B cell (primary cell): ENCODE measurements at regions of chr7 and their contacts with region 1.

Region 1: GRCh38 chr7:139340037-139340807 is 915 bp upstream of the FMC1 start:
- DNase-seq: peak; percentile 100
- ATAC-seq: peak; percentile 77
- H3K4me3 ChIP-seq: peak overlapping the region; percentile 73 to 99 (median 94)
- H3K4me3 Mint-ChIP-seq: peak overlapping the region; percentile 96
- H3K27ac ChIP-seq: peak overlapping the region; percentile 97 to 98
- H3K27ac Mint-ChIP-seq: peak overlapping the region; percentile 100
- H3K4me1 ChIP-seq: peaks cover 10 to 23% of the 10 kb centered on the region in 2 donors
- H3K4me1 Mint-ChIP-seq: peaks cover 30% of the 10 kb centered on the region
- H3K27me3 ChIP-seq: no peaks in the 10 kb centered on the region
- H3K27me3 Mint-ChIP-seq: peaks cover 5% of the 10 kb centered on the region
- CTCF ChIP-seq: peak; percentile 67

Region 2: DNA sequence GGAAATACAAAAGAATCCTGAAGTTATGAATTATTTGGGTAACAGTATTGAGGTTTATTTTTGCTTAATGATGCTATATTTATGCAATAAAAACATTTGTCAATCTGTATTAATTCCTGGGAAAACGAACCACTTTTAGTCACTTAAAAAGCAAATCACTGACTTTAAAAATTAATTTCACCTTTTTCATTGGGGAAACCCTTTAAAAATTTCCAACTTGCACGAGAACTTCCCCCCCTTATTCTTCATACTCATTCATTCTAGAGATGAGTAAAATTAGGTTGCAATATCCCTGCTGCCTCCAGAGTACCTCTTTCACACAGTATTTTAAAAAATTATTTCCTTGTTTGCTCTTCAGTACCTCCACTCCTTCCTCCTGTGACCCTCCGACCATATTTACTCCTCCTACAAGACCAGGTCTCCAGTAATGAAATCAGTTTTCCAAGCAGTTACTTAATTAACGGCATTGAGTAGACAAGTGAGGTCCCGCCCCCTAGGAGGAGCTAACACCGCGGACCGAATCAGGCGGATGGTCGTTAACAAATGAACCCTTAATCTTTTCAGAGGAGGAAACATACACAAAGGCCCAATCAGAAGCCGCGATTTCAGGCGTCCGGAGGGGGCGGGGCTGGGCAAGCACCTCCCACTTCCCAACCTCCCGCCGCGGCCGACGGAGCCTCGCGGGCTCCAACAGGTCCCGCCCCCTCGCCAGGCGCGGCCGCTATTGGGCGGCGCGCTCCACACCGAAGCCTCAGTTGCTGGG is 880.6 kb before region 1 on chr7:
- CTCF ChIA-PET with region 1: no interaction called
- POLR2A ChIA-PET with region 1: no interaction called
- intact Hi-C with region 1: loop called (anchors 5 kb)
- DNase-seq: peak; percentile 99
- ATAC-seq: peak; percentile 87
- H3K4me3 ChIP-seq: peak overlapping the region; percentile 40 to 73 (median 62)
- H3K4me3 Mint-ChIP-seq: peak overlapping the region; percentile 91
- H3K27ac ChIP-seq: peak overlapping the region in 1 of 2 donors; percentile 56
- H3K27ac Mint-ChIP-seq: peak overlapping the region; percentile 94
- H3K4me1 ChIP-seq: peaks cover 9 to 14% of the 10 kb centered on the region in 2 donors
- H3K4me1 Mint-ChIP-seq: peaks cover 19% of the 10 kb centered on the region
- H3K27me3 ChIP-seq: no peaks in the 10 kb centered on the region
- H3K27me3 Mint-ChIP-seq: peaks cover 3% of the 10 kb centered on the region
- CTCF ChIP-seq: no peak

Region 3: DNA sequence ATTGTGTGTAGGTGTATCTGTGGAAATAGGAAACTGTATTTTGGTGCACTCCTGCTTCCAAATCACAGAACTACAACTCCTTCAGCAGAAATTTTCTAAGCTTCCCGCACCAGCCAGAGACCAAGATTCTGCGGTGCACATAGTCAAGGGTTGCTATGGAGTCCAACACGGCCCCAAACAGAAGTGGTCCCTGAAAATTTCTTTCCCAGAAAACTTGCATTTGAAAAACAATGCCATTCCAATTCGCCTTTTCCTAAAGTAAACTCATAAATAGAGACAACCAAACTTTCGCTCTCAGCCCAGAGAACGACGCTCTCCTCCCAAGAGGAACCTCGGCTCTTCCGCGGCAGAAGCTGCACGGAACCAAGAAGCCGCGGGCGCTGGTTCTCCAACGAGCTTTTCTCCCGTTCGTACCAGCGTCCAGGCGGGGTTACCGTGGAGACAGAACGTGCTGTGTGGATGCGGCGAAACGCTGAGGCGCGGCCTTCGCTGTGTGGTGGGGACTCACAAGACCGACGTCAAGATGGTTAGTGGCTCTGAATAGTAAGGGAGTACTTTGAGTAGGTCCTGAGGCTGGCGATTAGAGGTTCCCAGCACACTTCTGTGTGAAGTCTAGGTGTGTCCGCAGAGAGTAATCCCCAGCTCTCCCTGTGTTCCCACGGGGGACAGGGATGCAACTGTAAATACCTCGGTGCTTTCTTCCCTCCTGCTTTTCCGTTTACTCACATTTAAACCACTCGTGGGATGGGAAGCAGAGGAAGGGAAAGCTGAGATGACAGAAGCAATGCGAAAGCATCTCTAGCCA is 206.7 kb before region 1 on chr7:
- CTCF ChIA-PET with region 1: no interaction called
- POLR2A ChIA-PET with region 1: interaction called, 4 read pairs
- intact Hi-C with region 1: loop called (anchors 1 kb)
- DNase-seq: peak; percentile 90
- ATAC-seq: peak; percentile 96
- H3K4me3 ChIP-seq: peak overlapping the region; percentile 46 to 63 (median 58)
- H3K4me3 Mint-ChIP-seq: peak overlapping the region; percentile 93
- H3K27ac ChIP-seq: peak overlapping the region; percentile 18 to 69
- H3K27ac Mint-ChIP-seq: peak overlapping the region; percentile 88
- H3K4me1 ChIP-seq: peaks cover 9 to 13% of the 10 kb centered on the region in 2 donors
- H3K4me1 Mint-ChIP-seq: peaks cover 18% of the 10 kb centered on the region
- H3K27me3 ChIP-seq: no peaks in the 10 kb centered on the region
- H3K27me3 Mint-ChIP-seq: no peaks in the 10 kb centered on the region
- CTCF ChIP-seq: no peak

Region 4: DNA sequence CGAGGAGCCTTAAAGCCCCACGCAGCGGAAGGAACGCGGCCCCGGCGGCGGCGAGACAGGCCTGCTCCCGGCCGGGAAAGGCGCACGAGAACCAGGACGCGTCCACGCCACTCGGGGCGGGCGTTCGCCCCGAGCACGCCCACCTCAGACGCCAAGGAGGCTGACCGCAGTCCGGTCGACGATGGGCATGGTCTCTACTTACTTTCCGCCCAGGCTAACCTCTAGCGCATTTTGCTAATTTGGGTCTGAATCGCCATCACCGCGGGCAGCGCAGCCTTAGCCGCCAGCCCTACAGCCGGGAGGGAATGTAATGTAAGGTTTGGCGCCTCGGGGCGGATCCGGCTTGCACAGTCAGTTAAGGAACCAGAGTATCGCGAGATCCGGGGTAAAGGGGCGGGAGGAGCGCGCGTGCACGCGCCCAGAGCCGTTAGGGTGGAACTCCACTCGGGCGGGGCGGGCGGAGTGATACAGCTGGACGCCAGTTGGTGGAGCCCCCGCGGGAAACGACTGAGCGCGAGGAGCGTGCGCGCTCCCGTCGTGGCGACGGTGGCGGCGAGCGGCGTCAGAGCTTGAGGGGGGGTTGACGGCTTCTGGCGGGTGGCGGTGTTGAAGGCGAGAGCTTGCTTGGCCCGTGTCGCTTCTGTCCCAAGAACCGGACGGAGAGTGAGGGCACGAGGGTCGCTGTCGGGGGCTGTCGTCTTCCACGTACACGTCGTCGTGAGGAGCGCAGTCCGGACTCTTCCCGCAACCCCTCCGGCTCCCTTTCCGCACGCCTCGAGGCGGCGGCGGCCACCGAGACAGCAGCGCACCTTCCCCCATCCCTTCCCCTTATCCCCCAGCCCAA is 19.4 kb after region 1 on chr7 and contains the start of gene LUC7L2:
- CTCF ChIA-PET with region 1: interaction called, 16 read pairs
- POLR2A ChIA-PET with region 1: interaction called, 28 read pairs
- intact Hi-C with region 1: loop called (anchors 1 kb)
- DNase-seq: peak; percentile 99
- ATAC-seq: peak; percentile 77
- H3K4me3 ChIP-seq: peak within 1 kb of the TSS; percentile 91 to 96 (median 96)
- H3K4me3 Mint-ChIP-seq: peak within 1 kb of the TSS; percentile 99
- H3K27ac ChIP-seq: peak within 1 kb of the TSS; percentile 98 to 99
- H3K27ac Mint-ChIP-seq: peak within 1 kb of the TSS; percentile 100
- H3K4me1 ChIP-seq: peaks cover 7 to 24% of the 10 kb centered on the region in 2 donors
- H3K4me1 Mint-ChIP-seq: peaks cover 39% of the 10 kb centered on the region
- H3K27me3 ChIP-seq: no peaks in the 10 kb centered on the region
- H3K27me3 Mint-ChIP-seq: no peaks in the 10 kb centered on the region
- CTCF ChIP-seq: no peak
- total RNA-seq, gene LUC7L2: 141 and 142 TPM in 2 replicates

Region 5: DNA sequence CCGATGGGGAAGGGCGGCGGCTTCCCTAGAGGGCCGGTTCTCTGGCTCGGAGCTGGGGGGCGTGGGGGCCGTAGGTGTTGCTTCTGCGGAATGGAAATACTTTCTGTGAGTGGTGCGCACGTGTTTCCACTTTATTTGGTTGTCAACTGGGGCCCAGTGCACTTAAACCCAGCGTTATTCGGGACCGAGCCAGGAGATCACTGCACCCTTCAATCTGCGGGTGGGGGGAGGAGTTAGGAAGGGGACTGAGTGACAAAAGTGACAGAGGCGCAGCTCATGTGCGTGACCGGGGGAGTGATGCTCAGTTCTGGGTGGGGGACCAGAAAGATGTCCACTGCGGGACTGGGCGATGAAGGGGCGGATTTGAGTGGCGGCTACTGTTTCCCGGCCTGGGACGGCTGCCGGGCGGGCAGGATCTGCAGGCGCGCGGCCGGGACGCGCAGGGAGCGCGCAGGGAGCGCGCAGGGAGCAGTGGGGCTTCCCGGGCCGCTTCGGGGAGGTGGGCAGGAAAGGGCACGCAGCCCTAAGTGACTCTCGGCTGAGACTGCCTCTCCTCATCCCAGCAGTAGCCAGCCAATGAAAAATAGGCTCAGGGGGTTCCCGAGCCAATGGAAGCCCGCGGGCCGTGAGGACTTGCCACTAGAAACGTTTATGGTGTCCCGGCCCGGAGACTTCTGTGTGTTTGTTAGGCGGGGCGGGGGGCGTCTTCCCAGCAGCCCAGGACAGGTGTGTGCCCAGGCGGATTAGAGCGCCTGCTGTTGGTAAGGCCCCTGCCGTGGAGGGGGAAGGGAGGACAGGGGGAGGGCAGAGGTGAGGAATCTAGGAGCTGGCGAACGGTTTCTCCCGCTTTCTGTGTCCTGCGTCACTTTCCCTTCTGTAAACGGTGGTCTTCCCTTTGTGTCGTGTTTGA is 890.9 kb after region 1 on chr7:
- CTCF ChIA-PET with region 1: no interaction called
- POLR2A ChIA-PET with region 1: no interaction called
- intact Hi-C with region 1: loop called (anchors 5 kb)
- DNase-seq: peak; percentile 69
- ATAC-seq: peak; percentile 10
- H3K4me3 ChIP-seq: peak overlapping the region; percentile 57 to 80 (median 64)
- H3K4me3 Mint-ChIP-seq: peak overlapping the region; percentile 90
- H3K27ac ChIP-seq: peak overlapping the region; percentile 93 to 96
- H3K27ac Mint-ChIP-seq: peak overlapping the region; percentile 99
- H3K4me1 ChIP-seq: peaks cover 49 to 74% of the 10 kb centered on the region in 2 donors
- H3K4me1 Mint-ChIP-seq: peaks cover 58% of the 10 kb centered on the region
- H3K27me3 ChIP-seq: no peaks in the 10 kb centered on the region
- H3K27me3 Mint-ChIP-seq: no peaks in the 10 kb centered on the region
- CTCF ChIP-seq: no peak